Activated CD8-positive, alpha-beta T cell treated with anti-CD3 and anti-CD28 coated beads, Interleukin-2, amount 10 ng/mL, durations not matched to agents 7 days and 5 days (primary cell): ENCODE measurements at regions of chr5 and their contacts with region 1.

Region 1: GRCh38 chr5:39194466-39195136 is 24.8 kb downstream of the FYB1 start:
- DNase-seq: peak; percentile 45
- ATAC-seq: peak; percentile 24
- H3K4me3 Mint-ChIP-seq: peak overlapping the region; percentile 79
- H3K27ac Mint-ChIP-seq: peak overlapping the region; percentile 87
- H3K4me1 Mint-ChIP-seq: peaks cover 75% of the 10 kb centered on the region
- H3K27me3 Mint-ChIP-seq: no peaks in the 10 kb centered on the region

Region 2: DNA sequence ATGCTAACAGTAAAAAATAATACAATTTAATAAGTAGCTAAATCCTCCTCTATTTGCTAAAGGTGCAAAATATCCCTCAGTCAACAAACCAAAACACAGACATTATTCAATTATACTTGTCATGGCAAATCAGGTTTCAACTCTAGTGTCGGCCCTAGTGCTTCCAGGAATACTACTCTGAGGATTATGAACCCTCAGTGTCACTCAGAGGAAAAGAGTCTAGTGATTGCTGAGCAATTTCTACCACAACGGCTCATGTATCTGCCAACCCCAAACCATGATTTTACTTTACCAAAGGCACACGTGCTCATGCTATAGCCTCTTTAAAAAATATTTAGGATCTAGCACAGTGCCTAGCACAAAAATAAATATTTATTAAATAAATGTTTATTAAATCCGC is 141.4 kb before region 1 on chr5:
- CTCF ChIA-PET with region 1: no interaction called
- POLR2A ChIA-PET with region 1: no interaction called
- DNase-seq: no peak
- ATAC-seq: no peak
- H3K4me3 Mint-ChIP-seq: no peak overlapping the region
- H3K27ac Mint-ChIP-seq: no peak overlapping the region
- H3K4me1 Mint-ChIP-seq: peaks cover 9% of the 10 kb centered on the region
- H3K27me3 Mint-ChIP-seq: no peaks in the 10 kb centered on the region

Region 3: GRCh38 chr5:39092581-39093350 is 101.8 kb before region 1 on chr5:
- CTCF ChIA-PET with region 1: no interaction called
- POLR2A ChIA-PET with region 1: no interaction called
- DNase-seq: no peak
- ATAC-seq: no peak
- H3K4me3 Mint-ChIP-seq: no peak overlapping the region
- H3K27ac Mint-ChIP-seq: no peak overlapping the region
- H3K4me1 Mint-ChIP-seq: no peaks in the 10 kb centered on the region
- H3K27me3 Mint-ChIP-seq: peaks cover 29% of the 10 kb centered on the region

Region 4: DNA sequence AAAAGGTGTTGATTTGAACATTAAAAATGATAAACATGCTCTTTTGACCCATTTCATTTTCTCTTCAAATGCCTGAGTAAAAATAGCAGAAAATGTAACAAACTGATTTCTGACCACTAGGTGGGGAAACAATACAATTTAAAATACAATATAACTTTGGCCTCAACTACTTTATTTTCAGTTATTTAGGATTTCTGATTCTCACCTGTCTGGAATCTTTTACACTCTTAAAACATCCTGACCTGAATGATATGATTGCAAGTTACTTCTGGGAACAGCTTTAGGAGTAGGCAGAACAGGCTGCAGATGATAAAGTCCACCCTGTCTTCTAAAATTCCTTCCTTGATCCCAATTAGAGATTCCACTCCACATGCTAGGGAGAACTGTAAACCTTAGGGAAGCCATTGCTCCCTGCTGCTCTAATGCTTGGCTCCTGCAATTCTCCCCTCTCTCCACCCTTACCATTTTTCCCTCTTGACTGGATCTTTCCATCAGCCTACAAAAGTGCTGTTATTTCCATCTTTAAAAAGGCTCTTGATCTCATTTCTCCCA is 45.5 kb before region 1 on chr5:
- CTCF ChIA-PET with region 1: interaction called, 18 read pairs
- POLR2A ChIA-PET with region 1: no interaction called
- DNase-seq: no peak
- ATAC-seq: peak; percentile 18
- H3K4me3 Mint-ChIP-seq: no peak overlapping the region
- H3K27ac Mint-ChIP-seq: peak overlapping the region; percentile 64
- H3K4me1 Mint-ChIP-seq: peaks cover 45% of the 10 kb centered on the region
- H3K27me3 Mint-ChIP-seq: no peaks in the 10 kb centered on the region

Region 5: GRCh38 chr5:39164529-39165402 is 29.8 kb before region 1 on chr5:
- CTCF ChIA-PET with region 1: interaction called, 11 read pairs
- POLR2A ChIA-PET with region 1: interaction called, 6 read pairs
- DNase-seq: no peak
- ATAC-seq: peak; percentile 81
- H3K4me3 Mint-ChIP-seq: peak overlapping the region; percentile 69
- H3K27ac Mint-ChIP-seq: peak overlapping the region; percentile 84
- H3K4me1 Mint-ChIP-seq: peaks cover 86% of the 10 kb centered on the region
- H3K27me3 Mint-ChIP-seq: no peaks in the 10 kb centered on the region